Endothelial cell of umbilical vein (primary cell): ENCODE measurements at regions of chr12 and their contacts with region 1.

Region 1: DNA sequence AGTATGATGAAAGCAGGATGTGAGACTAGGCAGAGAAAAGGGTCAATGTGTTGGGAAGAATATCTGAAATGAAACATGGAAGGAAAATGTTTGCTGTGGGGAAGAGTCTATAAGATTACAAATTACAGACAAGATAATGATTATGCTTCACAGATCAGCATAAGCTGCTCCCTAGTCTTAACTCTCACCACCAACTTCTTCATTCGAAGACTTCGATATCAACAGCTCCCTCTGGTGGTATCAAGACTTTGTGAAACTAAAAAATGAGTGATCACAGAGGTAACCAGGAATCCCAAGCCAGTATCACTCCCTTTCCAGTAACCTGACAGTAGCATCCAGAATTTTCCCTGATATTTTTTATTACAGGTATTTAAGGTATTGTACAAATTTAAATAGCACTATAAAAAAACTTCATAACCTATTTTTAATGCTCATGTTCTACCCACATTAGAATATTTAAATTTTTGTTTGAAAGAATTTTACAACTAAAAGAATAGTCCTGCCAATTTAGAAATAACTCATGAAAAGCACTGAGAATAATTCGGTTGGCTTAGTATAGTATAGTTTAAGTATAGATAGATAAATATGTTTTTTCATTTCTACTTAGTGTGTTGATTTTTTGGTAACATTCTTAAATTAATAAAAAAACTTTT is 84.4 kb downstream of the C2CD5 start:
- DNase-seq: peak; percentile 37
- H3K4me3 ChIP-seq: no peak overlapping the region
- H3K27ac ChIP-seq: no peak overlapping the region
- H3K4me1 ChIP-seq: no peaks in the 10 kb centered on the region
- H3K27me3 ChIP-seq: no peaks in the 10 kb centered on the region
- CTCF ChIP-seq: peak; percentile 40 to 44
- POLR2A ChIP-seq: no peak

Region 2: DNA sequence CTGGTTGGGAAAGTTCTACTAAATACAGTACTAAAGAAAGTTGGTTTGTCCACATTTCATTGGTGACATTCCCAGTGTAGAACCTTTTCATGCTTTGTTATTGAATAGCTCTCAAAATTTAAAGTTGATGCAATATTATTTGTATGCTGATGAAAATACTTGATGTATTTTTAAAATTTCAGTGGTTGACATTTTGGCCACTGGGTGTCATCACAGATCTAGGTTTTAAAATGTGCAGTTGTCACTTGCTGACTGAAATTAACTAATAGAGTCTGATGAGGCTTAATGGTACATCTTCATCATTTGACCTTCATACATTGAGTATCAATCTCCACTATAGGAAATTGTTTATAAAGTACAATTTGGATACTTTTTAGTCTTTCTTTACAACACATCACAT is 376.8 kb before region 1 on chr12:
- CTCF ChIA-PET with region 1: interaction called, 36 read pairs
- POLR2A ChIA-PET with region 1: no interaction called
- dilution Hi-C with region 1: no loop called
- intact Hi-C with region 1: no loop called
- DNase-seq: peak; percentile 56
- H3K4me3 ChIP-seq: no peak overlapping the region
- H3K27ac ChIP-seq: no peak overlapping the region
- H3K4me1 ChIP-seq: no peaks in the 10 kb centered on the region
- H3K27me3 ChIP-seq: peaks cover 0 to 2% of the 10 kb centered on the region in 2 experiments
- CTCF ChIP-seq: peak in 1 of 2 donors; percentile 12
- POLR2A ChIP-seq: no peak

Region 3: GRCh38 chr12:22406627-22407026 is 53.3 kb before region 1 on chr12:
- CTCF ChIA-PET with region 1: no interaction called
- POLR2A ChIA-PET with region 1: no interaction called
- dilution Hi-C with region 1: no loop called
- intact Hi-C with region 1: no loop called
- DNase-seq: no peak
- H3K4me3 ChIP-seq: no peak overlapping the region
- H3K27ac ChIP-seq: no peak overlapping the region
- H3K4me1 ChIP-seq: no peaks in the 10 kb centered on the region
- H3K27me3 ChIP-seq: no peaks in the 10 kb centered on the region
- CTCF ChIP-seq: no peak
- POLR2A ChIP-seq: no peak

Region 4: DNA sequence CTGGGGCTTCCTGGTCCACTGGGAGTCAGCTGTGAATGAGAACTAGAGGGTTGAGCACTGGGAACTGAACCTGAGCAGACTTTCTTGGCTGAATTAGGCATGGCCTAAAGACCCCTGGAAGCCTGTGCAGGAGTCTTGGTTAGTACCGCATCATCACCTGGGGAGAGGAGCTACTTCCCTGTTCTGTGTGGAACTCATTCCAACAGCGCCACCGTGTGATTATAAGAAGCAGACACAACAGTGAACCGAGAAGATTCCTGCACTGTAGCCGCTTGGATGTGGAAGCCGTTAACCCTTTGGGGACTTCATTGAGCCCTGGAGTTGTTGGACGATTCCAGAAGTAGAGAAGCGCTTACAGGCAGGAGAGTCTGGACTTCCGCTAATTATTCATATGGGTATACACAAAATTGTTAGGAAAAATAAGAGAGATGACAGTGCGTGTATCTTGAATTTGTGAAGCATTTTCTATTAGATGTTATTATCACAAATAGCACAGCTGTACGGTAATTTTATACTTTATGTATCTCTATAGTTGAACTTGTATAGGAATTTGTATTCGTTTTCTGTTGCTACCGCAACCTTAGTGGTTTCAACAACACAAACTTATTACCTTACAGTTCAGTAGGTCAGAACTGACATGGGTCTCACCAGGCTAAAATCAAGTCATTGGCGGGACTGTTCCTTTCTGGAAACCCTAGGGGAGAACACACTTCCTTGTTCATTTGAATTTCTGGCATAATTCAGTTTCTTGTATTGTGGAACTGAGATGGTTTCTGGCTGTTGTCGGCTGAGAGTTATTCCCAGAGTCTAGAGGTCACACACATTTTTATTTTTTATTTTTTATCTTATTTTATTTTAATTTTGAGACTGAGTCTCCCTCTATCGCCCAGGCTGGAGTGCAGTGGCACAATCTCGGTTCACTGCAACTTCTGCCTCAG is 16.3 kb before region 1 on chr12:
- CTCF ChIA-PET with region 1: interaction called, 12 read pairs
- POLR2A ChIA-PET with region 1: no interaction called
- dilution Hi-C with region 1: no loop called
- intact Hi-C with region 1: no loop called
- DNase-seq: peak; percentile 67
- H3K4me3 ChIP-seq: no peak overlapping the region
- H3K27ac ChIP-seq: no peak overlapping the region
- H3K4me1 ChIP-seq: no peaks in the 10 kb centered on the region
- H3K27me3 ChIP-seq: peaks cover 0 to 4% of the 10 kb centered on the region in 2 experiments
- CTCF ChIP-seq: peak; percentile 58 to 67
- POLR2A ChIP-seq: no peak

Region 5: GRCh38 chr12:22518067-22518719 is 58.2 kb after region 1 on chr12:
- CTCF ChIA-PET with region 1: interaction called, 19 read pairs
- POLR2A ChIA-PET with region 1: no interaction called
- dilution Hi-C with region 1: no loop called
- intact Hi-C with region 1: no loop called
- DNase-seq: peak; percentile 86
- H3K4me3 ChIP-seq: no peak overlapping the region
- H3K27ac ChIP-seq: no peak overlapping the region
- H3K4me1 ChIP-seq: peaks cover 8% of the 10 kb centered on the region
- H3K27me3 ChIP-seq: no peaks in the 10 kb centered on the region
- CTCF ChIP-seq: no peak
- POLR2A ChIP-seq: no peak

Region 6: DNA sequence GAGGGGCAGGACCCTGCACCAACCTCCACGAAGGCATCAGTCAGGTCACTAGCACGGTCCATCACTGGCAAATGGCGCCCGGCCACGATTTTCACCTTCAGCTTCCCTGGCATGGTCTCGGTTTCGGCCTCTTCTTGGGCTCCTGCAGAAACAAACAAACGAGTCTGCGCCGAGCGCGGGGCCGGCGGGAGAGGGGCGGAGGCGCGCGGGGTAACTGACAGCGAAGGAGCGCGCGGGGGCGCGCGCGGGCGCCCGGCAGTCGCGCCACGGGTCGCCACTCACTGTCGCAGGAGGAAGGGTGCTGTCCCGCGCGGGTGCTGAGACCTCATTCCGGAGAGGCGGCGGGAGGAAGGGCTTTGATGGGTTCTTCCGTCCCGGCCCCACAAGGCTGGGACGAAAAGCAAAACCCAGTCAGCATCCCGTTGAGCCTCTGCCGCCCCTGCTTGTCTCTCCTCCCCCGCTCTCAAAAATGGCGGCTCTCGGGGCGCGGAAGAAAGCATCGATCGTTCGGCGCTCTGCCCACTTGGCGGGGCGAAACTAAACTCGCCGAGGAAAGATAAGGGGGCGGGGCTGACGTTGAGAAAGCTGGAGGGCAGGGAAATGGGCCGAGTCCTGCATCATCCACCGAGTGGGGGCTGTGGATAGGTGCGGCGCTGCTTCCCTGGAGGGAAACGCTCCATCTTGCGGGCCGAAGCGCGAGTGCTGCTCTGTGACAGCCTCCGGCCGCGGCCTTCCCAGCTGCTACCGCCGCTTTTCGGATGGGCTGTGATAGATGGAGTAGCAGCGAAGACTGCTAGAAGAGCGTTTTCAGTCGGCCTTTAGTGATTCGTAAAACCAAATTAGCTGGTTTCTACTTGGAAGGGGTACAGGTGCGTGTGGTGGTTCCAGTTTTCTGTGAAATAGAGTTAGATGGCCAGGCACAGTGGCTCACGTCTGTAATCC is 84.3 kb after region 1 on chr12 and contains the start of gene C2CD5:
- CTCF ChIA-PET with region 1: interaction called, 10 read pairs
- POLR2A ChIA-PET with region 1: no interaction called
- dilution Hi-C with region 1: no loop called
- intact Hi-C with region 1: no loop called
- DNase-seq: peak; percentile 97
- H3K4me3 ChIP-seq: peak within 1 kb of the TSS; percentile 56 to 73 (median 67)
- H3K27ac ChIP-seq: peak within 1 kb of the TSS; percentile 79
- H3K4me1 ChIP-seq: peaks cover 13% of the 10 kb centered on the region
- H3K27me3 ChIP-seq: no peaks in the 10 kb centered on the region
- CTCF ChIP-seq: peak in 1 of 2 donors; percentile 44
- POLR2A ChIP-seq: peak; percentile 66
- total RNA-seq, gene C2CD5: 29.3 and 32.9 TPM in 2 replicates

Region 7: DNA sequence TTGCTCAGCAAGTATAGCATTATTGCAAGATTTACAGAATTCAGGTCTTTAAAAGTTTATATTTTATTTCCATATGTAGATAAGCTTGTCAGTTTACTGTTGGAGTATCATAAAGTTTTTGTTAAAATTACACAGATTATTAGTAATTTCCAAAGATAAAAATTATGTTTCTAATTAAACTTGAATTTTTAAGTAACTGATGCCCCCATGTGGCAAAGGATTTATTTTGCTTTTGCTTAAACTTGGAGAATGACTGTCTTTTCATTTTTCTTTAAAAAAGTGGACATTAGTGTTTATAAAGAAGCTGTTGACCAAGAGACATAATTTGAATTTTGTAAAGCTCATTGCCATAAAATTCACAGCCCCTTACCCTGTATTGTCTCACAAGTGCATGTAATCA is 210.8 kb after region 1 on chr12:
- CTCF ChIA-PET with region 1: interaction called, 10 read pairs
- POLR2A ChIA-PET with region 1: no interaction called
- dilution Hi-C with region 1: no loop called
- intact Hi-C with region 1: no loop called
- DNase-seq: peak; percentile 29
- H3K4me3 ChIP-seq: no peak overlapping the region
- H3K27ac ChIP-seq: no peak overlapping the region
- H3K4me1 ChIP-seq: no peaks in the 10 kb centered on the region
- H3K27me3 ChIP-seq: no peaks in the 10 kb centered on the region
- CTCF ChIP-seq: no peak
- POLR2A ChIP-seq: no peak